Vagina (tissue), 2 donors: ENCODE measurements at regions of chr6 and their contacts with region 1.

Region 1: DNA sequence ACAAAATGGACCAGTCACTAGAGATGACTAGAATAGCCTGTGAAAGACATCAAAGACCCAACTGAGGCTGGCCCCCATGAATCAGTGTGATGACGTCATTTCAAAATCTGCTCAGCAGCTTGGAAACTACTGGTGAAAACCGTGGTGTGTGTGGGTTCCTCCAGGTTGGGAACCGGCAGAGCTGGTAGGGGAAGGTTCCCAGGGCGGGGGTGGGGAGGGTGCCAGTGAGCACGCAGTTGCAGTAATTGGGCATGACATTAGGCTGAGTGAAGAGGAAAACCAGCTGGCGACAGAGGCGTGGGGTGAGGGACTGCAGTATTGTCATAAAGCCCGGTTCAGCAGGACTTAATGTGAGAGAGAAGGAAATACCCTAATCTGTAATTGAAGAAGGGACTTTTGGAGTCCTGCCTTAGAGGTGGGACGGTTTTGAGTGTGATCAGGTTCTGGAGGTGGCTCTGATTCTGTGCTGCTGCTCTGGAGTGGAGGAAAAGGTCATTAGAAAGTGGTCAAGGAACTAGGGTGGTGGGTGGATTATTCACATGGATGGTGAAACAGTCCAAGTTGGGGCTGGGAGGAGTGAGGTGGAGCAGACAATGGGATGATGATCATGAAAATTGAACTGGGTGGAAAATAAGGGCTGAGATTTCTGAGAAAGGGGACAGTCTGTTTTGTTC is 52.0 kb upstream of the MTHFD1L start:
- DNase-seq: no peak
- H3K4me3 ChIP-seq: no peak overlapping the region
- H3K27ac ChIP-seq: no peak overlapping the region
- H3K4me1 ChIP-seq: peaks cover 5% of the 10 kb centered on the region
- H3K27me3 ChIP-seq: no peaks in the 10 kb centered on the region
- CTCF ChIP-seq: no peak
- POLR2A ChIP-seq: no peak

Region 2: DNA sequence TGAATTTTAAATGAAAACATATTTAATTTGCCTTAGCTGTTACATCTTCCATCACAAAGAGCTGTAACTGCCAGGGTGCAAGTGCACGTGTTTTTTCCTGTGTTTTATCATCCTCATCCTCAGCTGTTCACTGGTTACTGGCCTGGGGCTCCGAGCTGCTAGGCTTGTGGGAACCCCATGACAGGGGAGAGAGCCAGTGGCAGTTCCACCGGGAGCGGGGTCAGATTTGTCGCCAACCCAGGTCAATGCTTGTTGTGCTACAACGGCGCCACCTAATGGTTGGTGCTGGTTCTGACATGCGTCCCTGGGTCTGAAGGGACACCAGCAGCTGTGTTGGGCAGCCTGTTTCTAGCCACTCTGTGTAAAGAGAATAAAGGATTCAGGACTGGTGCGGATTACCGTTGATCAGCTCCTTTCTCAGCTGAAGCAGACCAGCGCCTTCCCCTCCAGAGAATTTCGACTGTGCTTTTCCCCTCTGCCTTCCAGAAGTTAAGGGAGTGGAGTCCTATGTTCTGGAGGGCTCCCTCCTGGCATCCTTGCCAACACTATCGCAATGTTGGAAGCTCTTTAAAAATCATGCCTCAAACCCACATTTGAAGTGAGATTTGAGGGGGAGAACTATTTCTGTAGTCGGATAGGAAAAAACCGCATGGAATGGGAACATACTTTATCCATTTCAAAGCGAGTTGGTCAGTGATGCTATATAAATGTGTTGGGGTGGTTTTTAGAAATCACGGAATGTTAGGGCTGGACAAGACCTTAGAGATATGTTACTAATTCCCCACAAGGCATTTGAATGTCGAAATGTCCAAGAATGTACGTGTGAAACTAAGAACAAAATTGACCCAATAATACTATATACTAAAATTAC is 1381.3 kb before region 1 on chr6:
- intact Hi-C with region 1: no loop called
- DNase-seq: no peak
- H3K4me3 ChIP-seq: no peak overlapping the region
- H3K27ac ChIP-seq: no peak overlapping the region
- H3K4me1 ChIP-seq: peaks cover 6% of the 10 kb centered on the region
- H3K27me3 ChIP-seq: no peaks in the 10 kb centered on the region
- CTCF ChIP-seq: peak; percentile 90 to 96 (median 93)
- POLR2A ChIP-seq: no peak

Region 3: DNA sequence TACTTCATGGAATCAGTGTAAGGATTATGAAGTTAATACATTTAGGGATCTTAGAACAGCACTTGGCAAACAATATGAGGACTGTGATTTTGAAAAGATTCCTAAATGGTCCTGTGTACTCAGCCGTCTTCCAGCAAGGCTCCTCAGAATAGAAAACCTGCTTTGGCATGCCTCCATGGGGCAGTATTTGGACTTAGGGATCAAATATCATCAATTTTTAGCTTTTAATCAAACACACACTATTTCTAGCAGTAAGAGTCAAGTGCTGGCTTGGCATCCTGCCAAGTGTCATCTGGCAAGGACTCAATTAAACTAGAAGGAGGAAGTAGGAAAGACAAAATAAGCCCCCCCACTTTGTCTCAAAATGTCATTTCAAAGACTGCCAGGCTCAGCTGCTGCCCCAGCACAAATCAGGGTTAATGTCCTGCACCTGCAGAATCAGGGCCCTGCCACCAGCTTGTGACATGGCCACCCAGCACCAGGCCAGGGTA is 403.8 kb before region 1 on chr6:
- intact Hi-C with region 1: loop called (anchors 5 kb)
- DNase-seq: no peak
- H3K4me3 ChIP-seq: no peak overlapping the region
- H3K27ac ChIP-seq: no peak overlapping the region
- H3K4me1 ChIP-seq: peaks cover 9% of the 10 kb centered on the region
- H3K27me3 ChIP-seq: no peaks in the 10 kb centered on the region
- CTCF ChIP-seq: no peak
- POLR2A ChIP-seq: no peak

Region 4: GRCh38 chr6:150891888-150892485 is 78.5 kb after region 1 on chr6:
- intact Hi-C with region 1: no loop called
- DNase-seq: no peak
- H3K4me3 ChIP-seq: no peak overlapping the region
- H3K27ac ChIP-seq: no peak overlapping the region
- H3K4me1 ChIP-seq: peaks cover 7% of the 10 kb centered on the region
- H3K27me3 ChIP-seq: no peaks in the 10 kb centered on the region
- CTCF ChIP-seq: peak; percentile 85 to 87 (median 85)
- POLR2A ChIP-seq: no peak